Right ventricle myocardium superior (tissue), 1 donor: ENCODE measurements at regions of chrX and their contacts with region 1.

Region 1: GRCh38 chrX:70196961-70197805 is 19.9 kb downstream of the DGAT2L6 start:
- DNase-seq: no peak
- ATAC-seq: no peak

Region 2: GRCh38 chrX:70262952-70263567 is 65.9 kb after region 1 on chrX:
- intact Hi-C with region 1: loop called (anchors 5 kb)
- DNase-seq: peak; percentile 42
- ATAC-seq: peak; percentile 67